CD8-positive, alpha-beta T cell (primary cell): ENCODE measurements at regions of chr7 and their contacts with region 1.

Region 1: GRCh38 chr7:19754521-19755116 is 18.8 kb downstream of the TMEM196 start:
- DNase-seq: peak in 2 of 9 experiments; percentile 31 to 43
- ATAC-seq: peak; percentile 31
- H3K4me3 ChIP-seq: no peak overlapping the region
- H3K4me3 Mint-ChIP-seq: no peak overlapping the region
- H3K27ac ChIP-seq: no peak overlapping the region
- H3K27ac Mint-ChIP-seq: no peak overlapping the region
- H3K4me1 ChIP-seq: no peaks in the 10 kb centered on the region
- H3K4me1 Mint-ChIP-seq: no peaks in the 10 kb centered on the region
- H3K27me3 ChIP-seq: no peaks in the 10 kb centered on the region
- H3K27me3 Mint-ChIP-seq: peaks cover 7% of the 10 kb centered on the region
- CTCF ChIP-seq: peak; percentile 83

Region 2: DNA sequence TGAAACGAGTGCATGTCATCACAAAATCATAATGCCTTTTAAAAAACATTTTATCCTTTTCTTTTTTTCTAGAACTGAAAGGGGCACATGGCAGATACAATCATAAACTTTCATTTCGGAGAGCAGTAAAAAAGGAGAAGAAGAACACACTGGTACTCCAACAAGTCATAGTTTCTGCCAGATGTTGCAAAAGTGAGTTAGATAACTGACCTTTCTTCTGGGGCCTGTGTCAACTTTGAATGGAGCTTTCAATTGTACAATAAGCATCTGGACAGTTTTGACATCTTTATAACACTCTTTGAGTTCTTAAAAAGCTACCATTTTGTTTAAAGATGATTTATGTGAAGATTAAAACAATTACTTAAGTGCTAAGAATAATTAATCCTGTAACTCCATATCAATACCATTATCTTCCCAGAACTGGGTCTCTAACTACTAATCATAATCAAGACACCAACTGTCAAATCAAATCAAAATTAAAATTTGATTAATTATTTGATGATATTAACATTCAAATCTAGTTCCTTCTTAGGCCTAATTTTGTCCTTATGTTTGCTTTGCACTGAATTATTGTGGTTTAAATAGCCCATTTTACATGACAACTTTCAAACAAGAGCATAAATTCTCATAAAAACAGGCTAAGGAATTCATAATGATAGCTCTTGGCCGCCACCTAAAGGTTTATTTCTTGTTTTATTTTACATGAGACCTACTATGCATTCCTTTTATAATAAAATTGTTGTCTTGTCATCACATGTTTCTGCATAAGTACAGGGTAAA is 556.5 kb after region 1 on chr7:
- CTCF ChIA-PET with region 1: no interaction called
- POLR2A ChIA-PET with region 1: no interaction called
- intact Hi-C with region 1: loop called in 1 of 2 experiments (anchors 5 kb)
- DNase-seq: peak in 2 of 9 experiments; percentile 21 to 40
- ATAC-seq: no peak
- H3K4me3 ChIP-seq: no peak overlapping the region
- H3K4me3 Mint-ChIP-seq: no peak overlapping the region
- H3K27ac ChIP-seq: no peak overlapping the region
- H3K27ac Mint-ChIP-seq: no peak overlapping the region
- H3K4me1 ChIP-seq: no peaks in the 10 kb centered on the region
- H3K4me1 Mint-ChIP-seq: no peaks in the 10 kb centered on the region
- H3K27me3 ChIP-seq: no peaks in the 10 kb centered on the region
- H3K27me3 Mint-ChIP-seq: peaks cover 2% of the 10 kb centered on the region
- CTCF ChIP-seq: no peak